Activated naive CD8-positive, alpha-beta T cell treated with anti-CD3 and anti-CD28 coated beads, Interleukin-2, amount 10 ng/mL, durations not matched to agents 7 days and 5 days (primary cell): ENCODE measurements at regions of chr16 and their contacts with region 1.

Region 1: GRCh38 chr16:370443-370842 is at the start of gene MRPL28:
- DNase-seq: peak; percentile 91
- ATAC-seq: peak; percentile 97
- H3K4me3 Mint-ChIP-seq: peak within 1 kb of the TSS; percentile 89
- H3K27ac Mint-ChIP-seq: peak within 1 kb of the TSS; percentile 93
- H3K4me1 Mint-ChIP-seq: peaks cover 5% of the 10 kb centered on the region
- H3K27me3 Mint-ChIP-seq: no peaks in the 10 kb centered on the region
- total RNA-seq, gene MRPL28: 64.4 to 67.5 TPM

Region 2: GRCh38 chr16:381789-382717 is 11.6 kb after region 1 on chr16 and contains the start of gene PGAP6:
- POLR2A ChIA-PET with region 1: interaction called, 27 read pairs
- DNase-seq: peak; percentile 82
- ATAC-seq: peak; percentile 67
- H3K4me3 Mint-ChIP-seq: peak within 1 kb of the TSS; percentile 87
- H3K27ac Mint-ChIP-seq: peak within 1 kb of the TSS; percentile 34
- H3K4me1 Mint-ChIP-seq: peaks cover 9% of the 10 kb centered on the region
- H3K27me3 Mint-ChIP-seq: peaks cover 5% of the 10 kb centered on the region
- total RNA-seq, gene PGAP6: 58.9 to 59.0 TPM